Activated T-helper 1 cell treated with anti-CD3 and anti-CD28 coated beads, Interleukin-12 subunit alpha, Interleukin-12 subunit beta, Interleukin-2, Interleukin-4 antibody, amounts not matched to agents 30 ng/mL and 10 ng/mL and 1 ng/mL, durations not matched to agents 14 hours and 24 hours and 36 hours (primary cell): ENCODE measurements at regions of chr3 and their contacts with region 1.

Region 1: DNA sequence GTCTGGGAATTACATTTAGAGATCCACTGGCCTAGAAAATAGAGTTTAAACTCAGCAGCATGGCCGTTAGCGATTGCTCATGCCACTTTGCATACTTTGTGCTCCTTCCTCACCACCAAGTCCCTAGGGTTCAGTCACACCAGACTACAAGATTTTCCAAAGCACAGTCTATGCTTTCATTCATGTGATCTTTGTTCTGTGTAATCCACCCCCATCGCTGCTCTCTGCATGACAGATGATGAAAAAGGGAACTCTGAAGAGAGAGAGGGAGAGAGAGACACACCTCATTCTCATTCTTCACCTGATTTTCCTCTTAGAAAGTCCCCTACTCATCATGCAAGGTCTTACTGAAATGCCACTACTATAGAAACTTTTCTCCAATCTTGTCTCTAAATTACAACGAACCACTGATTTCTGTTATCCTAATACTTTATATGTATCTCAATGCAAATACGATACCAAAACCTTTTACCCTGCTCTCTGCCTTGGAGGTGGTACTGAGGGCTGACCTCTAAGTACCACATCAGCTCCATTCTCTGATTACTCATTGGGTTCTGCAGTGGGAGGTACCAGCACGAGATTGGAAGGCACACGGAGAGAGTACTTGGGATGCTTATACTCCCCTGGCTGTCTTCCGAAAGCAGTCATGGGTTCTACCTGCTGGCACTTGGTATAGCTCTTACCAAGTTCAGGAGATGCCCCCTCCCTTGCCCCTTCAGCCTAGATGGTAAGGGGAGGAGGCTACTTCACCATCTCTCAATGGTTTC is 1.1 kb upstream of the PARP15 start:
- DNase-seq: no peak
- H3K4me3 Mint-ChIP-seq: peak overlapping the region; percentile 25
- H3K27ac Mint-ChIP-seq: peak overlapping the region; percentile 77
- H3K4me1 Mint-ChIP-seq: peaks cover 59% of the 10 kb centered on the region
- H3K27me3 Mint-ChIP-seq: no peaks in the 10 kb centered on the region

Region 2: GRCh38 chr3:122533931-122534334 is 42.4 kb before region 1 on chr3:
- intact Hi-C with region 1: loop called (anchors 1 kb)
- DNase-seq: peak; percentile 46
- H3K4me3 Mint-ChIP-seq: no peak overlapping the region
- H3K27ac Mint-ChIP-seq: peak overlapping the region; percentile 80
- H3K4me1 Mint-ChIP-seq: peaks cover 60% of the 10 kb centered on the region
- H3K27me3 Mint-ChIP-seq: no peaks in the 10 kb centered on the region

Region 3: DNA sequence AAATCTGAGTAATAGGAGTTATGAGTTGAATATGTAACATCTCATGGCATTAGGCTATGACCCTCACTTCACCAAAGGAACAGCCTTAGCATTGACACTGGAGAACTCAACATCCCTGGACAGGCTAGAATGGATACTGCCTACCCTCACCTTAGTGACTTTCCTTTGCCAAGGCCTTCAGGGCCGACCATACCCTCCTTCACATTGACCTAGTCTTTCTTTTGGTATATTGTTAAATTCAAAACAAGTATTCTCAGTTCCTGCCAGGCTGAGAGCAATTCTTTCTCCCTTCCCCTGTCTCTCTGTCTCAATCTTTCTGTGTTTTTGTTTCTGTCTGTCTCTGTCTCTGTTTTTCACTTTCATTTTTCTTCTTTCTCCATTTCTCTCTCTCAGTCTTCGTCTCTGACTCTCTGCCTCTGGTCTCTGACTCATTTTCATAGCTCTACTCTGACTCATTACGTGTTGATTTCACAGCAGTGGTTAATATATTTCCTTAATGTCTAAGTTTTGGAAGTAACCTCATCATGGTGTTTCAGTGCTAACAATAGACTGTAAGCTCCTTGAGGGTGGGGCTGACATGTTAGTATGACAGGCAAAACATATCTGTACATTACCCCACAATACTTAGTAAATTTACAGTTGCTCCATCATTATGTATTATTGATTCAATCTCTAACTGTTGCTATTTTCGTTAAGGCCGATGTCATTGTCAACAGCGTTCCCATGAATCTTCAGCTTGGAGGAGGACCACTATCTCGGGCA is 33.6 kb after region 1 on chr3:
- intact Hi-C with region 1: loop called (anchors 1 kb)
- DNase-seq: peak; percentile 31
- H3K4me3 Mint-ChIP-seq: peak overlapping the region; percentile 58
- H3K27ac Mint-ChIP-seq: peak overlapping the region; percentile 89
- H3K4me1 Mint-ChIP-seq: peaks cover 20% of the 10 kb centered on the region
- H3K27me3 Mint-ChIP-seq: no peaks in the 10 kb centered on the region

Region 4: GRCh38 chr3:122668930-122669730 is 92.8 kb after region 1 on chr3:
- intact Hi-C with region 1: loop called (anchors 1 kb)
- DNase-seq: no peak
- H3K4me3 Mint-ChIP-seq: no peak overlapping the region
- H3K27ac Mint-ChIP-seq: peak overlapping the region; percentile 80
- H3K4me1 Mint-ChIP-seq: peaks cover 14% of the 10 kb centered on the region
- H3K27me3 Mint-ChIP-seq: peaks cover 2% of the 10 kb centered on the region